ENCODE measurements at regions of chr3 and their contacts with region 1.

Region 1: DNA sequence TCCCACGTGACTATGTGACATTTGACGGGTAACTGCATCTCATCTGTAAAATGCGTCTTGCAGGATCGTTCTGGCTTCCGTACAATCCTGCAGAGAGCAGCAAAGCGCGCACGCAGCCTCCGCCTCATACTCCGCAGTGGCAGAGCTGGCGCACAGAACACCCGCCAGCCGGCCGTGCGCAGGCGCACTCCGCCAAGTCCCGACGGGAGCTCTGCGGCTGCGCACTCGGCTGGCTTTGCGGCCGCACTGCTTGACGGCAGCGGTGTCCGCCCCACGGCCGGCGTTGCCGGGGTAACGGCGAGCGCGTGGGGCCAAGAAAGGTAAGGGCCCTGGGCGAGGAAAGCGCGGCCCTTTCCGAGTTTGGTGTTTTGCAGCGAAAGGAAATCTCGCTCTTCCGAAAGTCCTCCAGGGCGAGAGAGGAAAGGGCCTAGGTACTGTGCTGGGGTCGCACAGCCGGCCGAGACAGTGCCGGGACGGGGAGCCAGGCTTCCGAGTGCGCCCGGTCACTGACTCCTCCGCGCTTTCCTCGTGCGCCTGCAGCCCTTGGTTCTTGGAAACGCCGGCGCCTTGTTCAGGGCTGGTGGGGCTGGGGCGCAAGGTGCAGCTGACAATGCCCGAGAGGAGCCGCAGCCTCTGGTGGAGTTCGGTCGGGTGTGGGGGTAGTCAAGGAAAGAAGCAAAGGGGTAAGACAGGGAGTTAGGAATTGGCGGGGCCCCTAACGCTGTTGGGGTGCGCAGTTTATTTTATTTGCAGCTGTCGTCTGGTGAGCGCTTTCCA is at the start of gene TSEN2:
- DNase-seq: peak; percentile 96
- ATAC-seq: peak; percentile 98
- H3K4me3 Mint-ChIP-seq: peak within 1 kb of the TSS; percentile 95
- H3K27ac Mint-ChIP-seq: peak within 1 kb of the TSS; percentile 96
- H3K4me1 Mint-ChIP-seq: peaks cover 30% of the 10 kb centered on the region
- H3K27me3 Mint-ChIP-seq: no peaks in the 10 kb centered on the region
- total RNA-seq, gene TSEN2: 9.4 to 10.7 TPM

Region 2: GRCh38 chr3:12135029-12135657 is 349.2 kb before region 1 on chr3:
- CTCF ChIA-PET with region 1: interaction called, 160 read pairs
- POLR2A ChIA-PET with region 1: interaction called, 4 read pairs
- DNase-seq: peak; percentile 65
- ATAC-seq: peak; percentile 89
- H3K4me3 Mint-ChIP-seq: no peak overlapping the region
- H3K27ac Mint-ChIP-seq: no peak overlapping the region
- H3K4me1 Mint-ChIP-seq: peaks cover 3% of the 10 kb centered on the region
- H3K27me3 Mint-ChIP-seq: peaks cover 27% of the 10 kb centered on the region

Region 3: DNA sequence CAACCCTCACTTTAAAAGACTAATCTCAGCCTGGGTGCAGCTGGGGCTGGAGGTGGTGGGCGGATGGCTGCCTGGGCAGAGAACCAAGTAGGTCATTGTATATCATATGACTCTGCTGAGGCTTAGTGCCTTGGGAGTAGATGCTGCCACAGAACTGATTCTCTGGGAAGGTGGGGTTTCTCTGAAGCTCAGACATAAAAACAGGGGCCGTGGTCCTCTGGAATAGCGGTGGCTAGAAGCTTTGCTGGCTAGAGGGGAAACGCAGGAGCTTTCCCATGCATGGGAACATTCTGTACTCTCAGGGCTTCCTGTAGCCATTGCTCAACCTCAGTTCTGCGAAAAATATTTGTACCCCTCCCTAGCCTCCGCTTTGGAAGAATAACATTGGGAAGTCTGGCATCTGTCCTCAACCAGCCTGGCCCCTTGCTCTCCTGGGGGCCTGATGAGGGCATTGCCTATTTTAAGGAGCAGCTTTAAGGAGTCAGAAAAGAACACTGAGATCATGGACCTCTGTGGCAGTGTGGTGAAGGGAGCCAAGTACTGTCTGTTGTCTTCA is 340.4 kb before region 1 on chr3:
- CTCF ChIA-PET with region 1: interaction called, 160 read pairs
- POLR2A ChIA-PET with region 1: no interaction called
- DNase-seq: no peak
- ATAC-seq: no peak
- H3K4me3 Mint-ChIP-seq: no peak overlapping the region
- H3K27ac Mint-ChIP-seq: no peak overlapping the region
- H3K4me1 Mint-ChIP-seq: no peaks in the 10 kb centered on the region
- H3K27me3 Mint-ChIP-seq: peaks cover 8% of the 10 kb centered on the region

Region 4: DNA sequence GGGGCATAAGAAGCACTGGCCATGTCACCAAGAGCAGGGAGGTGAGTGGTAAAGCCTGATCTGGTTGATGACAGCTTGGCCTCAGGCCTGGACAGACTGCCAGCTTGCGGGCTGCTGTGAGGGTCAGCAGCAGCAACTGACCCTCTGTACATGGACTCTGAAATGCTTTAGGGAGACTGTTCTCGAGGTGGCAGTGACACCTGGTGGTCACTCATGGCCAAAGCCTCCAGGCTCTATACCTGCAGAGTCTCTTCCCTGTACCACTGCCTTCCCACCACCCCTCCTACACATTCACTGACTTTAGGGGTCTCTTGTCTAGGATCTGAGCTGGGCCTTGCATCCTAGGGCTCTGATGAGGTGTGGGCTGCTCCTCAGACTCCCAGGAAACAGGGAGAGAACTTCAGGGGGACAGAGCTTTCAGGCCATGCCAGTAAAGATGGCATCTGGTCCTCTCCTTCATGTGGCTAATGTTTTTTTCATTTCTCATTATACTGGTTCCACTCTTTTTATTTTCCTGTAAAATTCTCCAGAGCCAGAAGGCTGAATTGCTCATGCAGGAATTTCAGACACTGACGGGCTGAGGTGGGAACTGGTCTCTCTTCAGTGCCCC is 308.4 kb before region 1 on chr3:
- CTCF ChIA-PET with region 1: interaction called, 21 read pairs
- POLR2A ChIA-PET with region 1: no interaction called
- DNase-seq: peak; percentile 28
- ATAC-seq: peak; percentile 64
- H3K4me3 Mint-ChIP-seq: no peak overlapping the region
- H3K27ac Mint-ChIP-seq: no peak overlapping the region
- H3K4me1 Mint-ChIP-seq: peaks cover 2% of the 10 kb centered on the region
- H3K27me3 Mint-ChIP-seq: no peaks in the 10 kb centered on the region

Region 5: GRCh38 chr3:12395349-12396012 is 88.9 kb before region 1 on chr3:
- CTCF ChIA-PET with region 1: interaction called, 11 read pairs
- POLR2A ChIA-PET with region 1: no interaction called
- DNase-seq: no peak
- ATAC-seq: peak; percentile 81
- H3K4me3 Mint-ChIP-seq: peak overlapping the region; percentile 59
- H3K27ac Mint-ChIP-seq: peak overlapping the region; percentile 73
- H3K4me1 Mint-ChIP-seq: peaks cover 12% of the 10 kb centered on the region
- H3K27me3 Mint-ChIP-seq: peaks cover 10% of the 10 kb centered on the region

Region 6: GRCh38 chr3:12471243-12471651 is 13.1 kb before region 1 on chr3:
- CTCF ChIA-PET with region 1: interaction called, 15 read pairs
- POLR2A ChIA-PET with region 1: no interaction called
- DNase-seq: no peak
- ATAC-seq: no peak
- H3K4me3 Mint-ChIP-seq: no peak overlapping the region
- H3K27ac Mint-ChIP-seq: peak overlapping the region; percentile 15
- H3K4me1 Mint-ChIP-seq: peaks cover 3% of the 10 kb centered on the region
- H3K27me3 Mint-ChIP-seq: no peaks in the 10 kb centered on the region